ENCODE measurements at regions of chr19 and their contacts with region 1.

Region 1: GRCh38 chr19:12139885-12140547 is at the start of gene ZNF20:
- DNase-seq: peak; percentile 97 to 98
- H3K4me3 ChIP-seq: peak within 1 kb of the TSS; percentile 65 to 87
- H3K27ac ChIP-seq: peak within 1 kb of the TSS; percentile 83 to 90
- H3K4me1 ChIP-seq: peaks cover 0 to 24% (median 15%) of the 10 kb centered on the region in 4 donors
- H3K27me3 ChIP-seq: no peaks in the 10 kb centered on the region
- CTCF ChIP-seq: no peak

Region 2: GRCh38 chr19:11798391-11799330 is 341.4 kb before region 1 on chr19 and contains the start of gene ZNF491:
- intact Hi-C with region 1: loop called (anchors 5 kb)
- DNase-seq: peak; percentile 95 to 96
- H3K4me3 ChIP-seq: peak within 1 kb of the TSS; percentile 65 to 82
- H3K27ac ChIP-seq: peak within 1 kb of the TSS; percentile 80 to 84
- H3K4me1 ChIP-seq: peaks cover 0 to 20% (median 13%) of the 10 kb centered on the region in 4 donors
- H3K27me3 ChIP-seq: no peaks in the 10 kb centered on the region
- CTCF ChIP-seq: peak in 1 of 2 experiments; percentile 15

Region 3: GRCh38 chr19:11964858-11965645 is 175.0 kb before region 1 on chr19 and contains the start of gene ZNF763:
- intact Hi-C with region 1: loop called (anchors 2 kb)
- DNase-seq: peak; percentile 97
- H3K4me3 ChIP-seq: peak within 1 kb of the TSS; percentile 59 to 63
- H3K27ac ChIP-seq: peak within 1 kb of the TSS; percentile 93 to 96
- H3K4me1 ChIP-seq: peaks cover 0 to 27% (median 14%) of the 10 kb centered on the region in 4 donors
- H3K27me3 ChIP-seq: no peaks in the 10 kb centered on the region
- CTCF ChIP-seq: peak in 1 of 2 experiments; percentile 1

Region 4: DNA sequence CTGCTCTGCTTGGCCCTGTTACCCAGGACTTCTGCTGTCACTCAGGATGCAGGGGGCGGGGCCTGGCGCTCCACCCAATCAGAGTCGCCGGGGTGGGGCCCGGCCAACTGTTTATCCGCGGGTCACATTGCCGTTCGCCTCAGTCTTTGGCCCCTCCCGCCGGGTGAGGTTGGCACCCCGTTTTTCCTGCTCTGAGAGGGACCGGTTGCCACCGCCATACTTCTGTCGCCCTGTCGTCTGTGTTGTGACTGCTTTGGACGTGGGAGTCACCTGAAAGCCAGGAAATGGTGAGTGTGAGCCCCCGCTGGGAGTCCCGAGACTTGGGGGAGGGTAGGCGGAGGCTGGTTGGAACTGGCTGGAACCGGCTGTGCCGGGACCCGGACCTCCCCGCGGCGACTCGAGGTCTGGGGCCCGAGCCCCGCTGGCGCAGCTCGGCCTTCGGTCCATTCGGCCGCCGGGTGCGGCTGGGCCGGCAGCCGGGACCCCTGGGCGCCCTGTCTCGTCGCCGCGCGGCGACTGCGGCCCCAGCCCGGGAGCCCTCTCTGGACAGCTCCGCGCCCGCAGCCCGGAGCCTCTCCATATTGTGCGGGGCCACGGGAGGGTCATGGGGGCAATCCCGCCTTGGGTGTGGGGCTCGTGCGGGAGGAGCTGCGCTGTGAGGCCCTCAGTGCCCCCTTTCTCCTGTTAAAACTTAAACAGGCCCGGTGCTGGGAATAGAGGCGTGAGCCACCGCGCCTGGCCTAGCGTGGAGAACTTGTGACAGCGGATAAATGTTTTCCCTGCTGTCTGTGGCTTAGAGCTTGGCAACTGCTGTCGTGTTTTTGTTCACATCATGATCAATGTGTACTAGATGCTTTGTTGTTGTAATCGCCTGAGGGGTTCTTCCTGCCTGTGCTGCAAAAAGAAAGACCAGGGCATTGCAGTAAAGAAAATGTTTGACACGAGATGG is 75.2 kb before region 1 on chr19 and contains the start of gene ZNF844:
- intact Hi-C with region 1: loop called (anchors 5 kb)
- DNase-seq: peak; percentile 99
- H3K4me3 ChIP-seq: peak within 1 kb of the TSS; percentile 88 to 93
- H3K27ac ChIP-seq: peak within 1 kb of the TSS; percentile 95 to 99
- H3K4me1 ChIP-seq: peaks cover 0 to 17% (median 9%) of the 10 kb centered on the region in 4 donors
- H3K27me3 ChIP-seq: no peaks in the 10 kb centered on the region
- CTCF ChIP-seq: no peak

Region 5: DNA sequence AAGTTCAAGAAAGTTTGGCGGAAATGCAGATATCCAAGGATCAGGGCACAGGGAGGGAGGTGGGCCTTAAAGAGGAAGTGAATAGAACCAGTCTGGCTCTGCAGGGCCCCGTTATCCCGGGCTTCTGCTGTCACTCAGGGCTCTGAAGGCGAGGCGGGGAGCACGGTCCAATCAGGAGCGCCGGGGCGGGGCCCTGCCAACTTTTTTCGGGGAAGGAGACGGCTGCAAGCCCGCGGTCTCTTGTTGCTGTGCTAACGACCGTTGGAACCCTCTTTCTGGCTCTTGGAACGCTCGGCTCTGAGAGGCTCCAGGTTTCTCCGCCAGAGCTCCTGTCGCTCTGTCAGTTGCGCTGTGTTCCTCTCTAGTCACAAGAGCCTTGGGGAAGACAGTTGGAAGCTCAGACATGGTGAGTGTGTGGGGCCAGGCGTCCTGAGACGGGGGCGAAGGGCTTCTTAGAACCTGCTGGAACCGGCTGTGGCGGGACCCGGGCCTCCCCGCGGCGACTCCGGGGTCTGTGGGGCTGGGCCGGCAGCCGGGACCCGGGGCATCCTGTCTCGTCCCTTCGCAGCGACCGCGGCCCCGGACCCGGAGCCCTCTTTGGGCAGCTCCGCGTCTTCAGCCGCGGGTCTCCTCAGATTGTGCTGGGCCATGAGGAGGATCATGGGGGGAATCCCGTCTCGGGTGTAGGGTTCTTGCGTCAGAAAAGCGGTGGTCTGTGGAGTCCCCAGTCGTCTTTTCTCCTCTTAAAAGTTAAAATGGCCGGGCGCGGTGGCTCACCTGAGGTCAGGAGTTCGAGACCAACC is 47.8 kb before region 1 on chr19:
- intact Hi-C with region 1: loop called (anchors 5 kb)
- DNase-seq: peak; percentile 85 to 93
- H3K4me3 ChIP-seq: peak overlapping the region; percentile 58 to 70
- H3K27ac ChIP-seq: peak overlapping the region; percentile 75 to 83
- H3K4me1 ChIP-seq: peaks cover 0 to 11% (median 0%) of the 10 kb centered on the region in 4 donors
- H3K27me3 ChIP-seq: no peaks in the 10 kb centered on the region
- CTCF ChIP-seq: no peak

Region 6: DNA sequence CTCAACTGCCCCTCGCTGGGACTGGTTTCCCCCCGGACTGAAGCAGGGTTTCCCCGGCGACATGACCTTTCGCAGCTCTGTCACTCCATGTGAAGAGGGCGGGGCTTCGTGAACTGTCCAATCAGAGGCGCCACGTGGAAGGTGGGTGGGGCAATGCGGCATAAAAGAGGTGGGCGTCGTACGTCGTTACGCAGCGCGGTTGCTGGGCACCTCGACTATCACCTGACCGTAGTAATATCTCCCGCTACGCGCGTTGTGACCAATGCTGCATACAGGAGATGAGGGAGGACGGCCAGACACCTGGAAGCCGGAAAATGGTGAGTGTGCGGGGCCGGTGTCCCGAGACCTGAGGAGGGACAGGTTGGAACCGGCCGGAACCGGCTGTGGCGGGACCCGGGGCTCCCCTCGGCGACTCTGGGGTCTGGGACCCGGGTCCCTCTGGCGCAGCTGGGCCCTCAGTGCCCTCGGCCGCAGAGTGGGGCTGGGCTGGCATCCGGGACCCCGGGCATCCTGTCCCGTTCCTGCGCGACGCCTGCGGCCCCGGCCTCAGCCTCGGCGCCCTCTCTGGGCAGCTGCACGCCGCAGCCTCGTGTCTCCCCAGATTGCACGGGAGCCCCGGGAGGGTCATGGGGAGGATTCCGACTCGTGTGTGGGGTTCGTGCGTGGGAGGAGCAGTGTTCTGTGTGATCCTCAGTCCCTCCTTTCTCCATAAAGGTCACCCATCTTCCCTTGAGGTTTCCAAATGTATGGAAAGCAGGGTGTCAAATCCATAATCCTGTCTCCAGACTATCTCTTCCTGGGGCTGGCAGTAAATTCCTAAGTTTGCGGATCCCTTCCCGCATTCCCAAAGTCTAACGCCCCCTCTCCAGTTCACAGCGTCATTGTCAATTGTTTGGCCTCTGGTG is 55.1 kb after region 1 on chr19:
- intact Hi-C with region 1: no loop called
- DNase-seq: peak; percentile 83 to 89
- H3K4me3 ChIP-seq: peak overlapping the region; percentile 55 to 67
- H3K27ac ChIP-seq: peak overlapping the region; percentile 62 to 68
- H3K4me1 ChIP-seq: peaks cover 0 to 8% (median 2%) of the 10 kb centered on the region in 4 donors
- H3K27me3 ChIP-seq: no peaks in the 10 kb centered on the region
- CTCF ChIP-seq: no peak

Measured in tibial artery (tissue), 4 donors.